Activated naive CD4-positive, alpha-beta T cell treated with anti-CD3 and anti-CD28 coated beads for 36 hours (primary cell): ENCODE measurements at regions of chr10 and their contacts with region 1.

Region 1: GRCh38 chr10:80205478-80206276 is at the start of gene ANXA11:
- DNase-seq: peak; percentile 86
- H3K4me3 Mint-ChIP-seq: peak within 1 kb of the TSS; percentile 84
- H3K27ac Mint-ChIP-seq: peak within 1 kb of the TSS; percentile 96
- H3K4me1 Mint-ChIP-seq: peaks cover 38% of the 10 kb centered on the region
- H3K27me3 Mint-ChIP-seq: no peaks in the 10 kb centered on the region
- total RNA-seq, gene ANXA11: 142 TPM

Region 2: GRCh38 chr10:79242620-79243152 is 963.0 kb before region 1 on chr10:
- CTCF ChIA-PET with region 1: no interaction called
- intact Hi-C with region 1: loop called (anchors 5 kb)
- DNase-seq: peak; percentile 69
- H3K4me3 Mint-ChIP-seq: peak overlapping the region; percentile 78
- H3K27ac Mint-ChIP-seq: peak overlapping the region; percentile 56
- H3K4me1 Mint-ChIP-seq: peaks cover 45% of the 10 kb centered on the region
- H3K27me3 Mint-ChIP-seq: no peaks in the 10 kb centered on the region

Region 3: DNA sequence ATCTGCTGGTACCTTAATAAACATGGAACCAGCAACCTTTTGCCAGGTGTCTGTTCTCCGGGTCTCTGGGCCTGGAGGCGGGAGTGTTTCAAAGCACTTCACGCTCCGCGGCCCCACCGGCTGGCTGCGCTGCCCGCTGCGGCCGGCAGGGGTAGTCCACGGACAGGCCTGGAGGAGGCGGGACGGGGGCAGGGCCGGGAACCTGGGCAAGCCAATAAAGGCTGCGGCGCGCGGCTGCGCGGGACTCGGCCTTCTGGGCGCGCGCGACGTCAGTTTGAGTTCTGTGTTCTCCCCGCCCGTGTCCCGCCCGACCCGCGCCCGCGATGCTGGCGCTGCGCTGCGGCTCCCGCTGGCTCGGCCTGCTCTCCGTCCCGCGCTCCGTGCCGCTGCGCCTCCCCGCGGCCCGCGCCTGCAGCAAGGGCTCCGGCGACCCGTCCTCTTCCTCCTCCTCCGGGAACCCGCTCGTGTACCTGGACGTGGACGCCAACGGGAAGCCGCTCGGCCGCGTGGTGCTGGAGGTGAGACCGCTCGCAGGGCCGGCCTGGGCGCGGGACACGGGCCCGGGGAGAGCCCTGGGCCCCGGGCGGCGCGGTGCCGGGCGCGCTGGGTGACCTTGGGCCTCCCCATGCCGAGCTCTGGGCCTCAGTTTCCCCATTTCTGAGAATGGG is 858.3 kb before region 1 on chr10 and contains the start of gene PPIF:
- CTCF ChIA-PET with region 1: no interaction called
- intact Hi-C with region 1: loop called (anchors 2 kb)
- DNase-seq: peak; percentile 93
- H3K4me3 Mint-ChIP-seq: peak within 1 kb of the TSS; percentile 89
- H3K27ac Mint-ChIP-seq: peak within 1 kb of the TSS; percentile 95
- H3K4me1 Mint-ChIP-seq: peaks cover 36% of the 10 kb centered on the region
- H3K27me3 Mint-ChIP-seq: no peaks in the 10 kb centered on the region
- total RNA-seq, gene PPIF: 94.1 to 95.6 TPM

Region 4: GRCh38 chr10:80078448-80079311 is 127.0 kb before region 1 on chr10 and contains the start of gene TMEM254:
- CTCF ChIA-PET with region 1: no interaction called
- intact Hi-C with region 1: loop called (anchors 1 kb)
- DNase-seq: peak; percentile 94
- H3K4me3 Mint-ChIP-seq: peak within 1 kb of the TSS; percentile 98
- H3K27ac Mint-ChIP-seq: peak within 1 kb of the TSS; percentile 85
- H3K4me1 Mint-ChIP-seq: peaks cover 30% of the 10 kb centered on the region
- H3K27me3 Mint-ChIP-seq: no peaks in the 10 kb centered on the region
- total RNA-seq, gene TMEM254: 16.2 to 16.7 TPM

Region 5: GRCh38 chr10:80171248-80171660 is 34.4 kb before region 1 on chr10:
- CTCF ChIA-PET with region 1: interaction called, 8 read pairs
- intact Hi-C with region 1: loop called (anchors 2 kb)
- DNase-seq: no peak
- H3K4me3 Mint-ChIP-seq: no peak overlapping the region
- H3K27ac Mint-ChIP-seq: no peak overlapping the region
- H3K4me1 Mint-ChIP-seq: peaks cover 13% of the 10 kb centered on the region
- H3K27me3 Mint-ChIP-seq: no peaks in the 10 kb centered on the region

Region 6: GRCh38 chr10:80292607-80293239 is 87.0 kb after region 1 on chr10:
- CTCF ChIA-PET with region 1: no interaction called
- intact Hi-C with region 1: no loop called
- DNase-seq: no peak
- H3K4me3 Mint-ChIP-seq: no peak overlapping the region
- H3K27ac Mint-ChIP-seq: no peak overlapping the region
- H3K4me1 Mint-ChIP-seq: no peaks in the 10 kb centered on the region
- H3K27me3 Mint-ChIP-seq: peaks cover 15% of the 10 kb centered on the region

Region 7: GRCh38 chr10:80453701-80454513 is 248.2 kb after region 1 on chr10 and contains the start of gene TSPAN14:
- CTCF ChIA-PET with region 1: no interaction called
- intact Hi-C with region 1: loop called (anchors 2 kb)
- DNase-seq: peak; percentile 74
- H3K4me3 Mint-ChIP-seq: peak within 1 kb of the TSS; percentile 98
- H3K27ac Mint-ChIP-seq: peak within 1 kb of the TSS; percentile 93
- H3K4me1 Mint-ChIP-seq: peaks cover 44% of the 10 kb centered on the region
- H3K27me3 Mint-ChIP-seq: no peaks in the 10 kb centered on the region
- total RNA-seq, gene TSPAN14: 33.5 to 35.5 TPM

Region 8: DNA sequence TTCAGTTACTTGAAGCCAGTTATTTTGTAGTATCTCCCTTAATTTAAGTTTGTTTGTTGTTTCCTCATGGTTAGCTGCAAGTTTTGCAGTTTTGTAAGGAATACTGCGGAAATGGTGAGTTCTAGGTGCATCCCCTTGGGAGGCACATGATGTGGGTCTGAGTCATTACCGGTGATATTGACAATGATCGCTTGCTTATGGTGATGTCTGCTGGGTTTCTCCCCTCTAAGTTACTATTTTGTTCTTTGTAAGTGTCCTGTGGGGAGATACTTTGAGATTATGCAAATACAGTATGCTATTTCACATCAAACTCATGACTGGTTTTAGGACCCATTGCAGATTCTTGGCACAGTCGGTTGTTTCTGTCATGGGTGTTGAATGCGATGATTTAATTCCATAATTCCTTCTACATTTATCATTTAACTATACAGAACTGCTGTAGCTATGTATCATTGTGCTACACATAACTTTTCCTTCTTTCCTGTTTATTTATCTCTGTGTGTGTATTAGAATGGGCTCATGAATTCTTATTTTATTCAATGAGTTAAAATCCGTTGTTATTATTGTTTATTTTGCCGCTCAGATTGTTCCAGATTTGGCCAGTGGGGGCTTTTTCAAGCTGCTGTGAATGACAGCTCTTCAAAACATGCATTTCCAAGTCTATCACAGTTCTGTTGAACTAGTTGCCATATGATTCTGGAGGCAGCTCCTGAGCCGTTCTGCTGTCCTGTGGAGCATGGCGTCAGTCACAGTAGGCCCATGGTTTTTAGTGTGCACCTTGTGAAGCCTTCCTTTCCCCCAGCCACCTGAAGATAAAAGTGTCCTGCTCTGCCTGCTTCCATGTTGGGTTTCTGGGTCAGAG is 266.8 kb after region 1 on chr10:
- CTCF ChIA-PET with region 1: no interaction called
- intact Hi-C with region 1: no loop called
- DNase-seq: peak; percentile 75
- H3K4me3 Mint-ChIP-seq: peak overlapping the region; percentile 36
- H3K27ac Mint-ChIP-seq: peak overlapping the region; percentile 98
- H3K4me1 Mint-ChIP-seq: peaks cover 87% of the 10 kb centered on the region
- H3K27me3 Mint-ChIP-seq: no peaks in the 10 kb centered on the region